Esophagus muscularis mucosa (tissue), 4 donors: ENCODE measurements at regions of chr11 and their contacts with region 1.

Region 1: DNA sequence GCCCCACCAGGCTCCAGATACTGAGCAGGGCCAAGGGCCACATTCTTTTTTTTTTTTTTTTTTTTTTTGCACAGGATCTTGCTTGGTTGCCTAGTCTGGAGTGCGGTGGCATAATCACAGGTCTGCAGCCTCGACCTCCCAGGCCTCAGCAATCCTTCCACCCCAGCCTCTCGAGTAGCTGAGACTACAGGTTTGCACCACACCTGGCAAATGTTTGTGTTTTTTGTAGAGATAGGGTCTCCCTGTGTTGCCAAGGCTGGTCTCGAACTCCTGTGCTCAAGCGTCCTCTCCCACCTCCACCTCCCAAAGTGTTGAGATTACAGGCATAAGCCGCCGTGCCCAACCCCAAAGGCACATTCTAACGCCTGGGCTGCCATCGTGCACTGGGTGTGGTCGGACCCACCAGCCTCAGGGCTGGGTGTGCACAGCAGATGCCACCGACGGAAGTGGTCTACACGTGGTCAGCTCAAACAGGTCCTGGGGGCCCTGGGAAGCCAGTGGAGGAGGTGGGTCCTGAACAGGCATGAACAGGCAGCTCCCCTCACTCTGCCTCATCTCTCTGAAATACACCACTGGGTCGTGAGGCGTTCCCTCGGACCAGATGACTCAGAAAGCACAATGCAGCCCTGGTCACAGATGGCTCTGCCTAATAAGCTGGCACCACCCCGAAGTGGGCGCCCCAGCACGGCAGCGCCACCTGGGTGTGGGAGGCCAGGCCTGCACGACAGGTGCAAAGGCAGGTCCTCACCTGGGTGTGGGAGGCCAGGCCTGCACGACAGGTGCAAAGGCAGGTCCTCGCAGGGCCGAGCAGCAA is 5.1 kb upstream of the B4GALNT4 start:
- DNase-seq: no peak
- H3K4me3 ChIP-seq: no peak overlapping the region
- H3K27ac ChIP-seq: no peak overlapping the region
- H3K4me1 ChIP-seq: peaks cover 5 to 16% (median 14%) of the 10 kb centered on the region in 4 donors
- H3K27me3 ChIP-seq: peaks cover 0 to 23% (median 20%) of the 10 kb centered on the region in 4 donors
- CTCF ChIP-seq: no peak
- EP300 ChIP-seq: no peak
- POLR2A ChIP-seq: no peak

Region 2: GRCh38 chr11:207208-207862 is 156.8 kb before region 1 on chr11 and contains the starts of genes BET1L and RIC8A:
- intact Hi-C with region 1: loop called (anchors 10 kb)
- DNase-seq: peak; percentile 99
- H3K4me3 ChIP-seq: peak within 1 kb of the TSS; percentile 81 to 99 (median 86)
- H3K27ac ChIP-seq: peak within 1 kb of the TSS; percentile 96 to 99 (median 98)
- H3K4me1 ChIP-seq: peaks cover 41 to 73% (median 63%) of the 10 kb centered on the region in 4 donors
- H3K27me3 ChIP-seq: no peaks in the 10 kb centered on the region
- CTCF ChIP-seq: no peak
- EP300 ChIP-seq: no peak
- POLR2A ChIP-seq: peak; percentile 87
- total RNA-seq, gene BET1L: 16.2 to 32.9 (median 30.5) TPM
- total RNA-seq, gene RIC8A: 76.8 to 137 (median 123) TPM

Region 3: DNA sequence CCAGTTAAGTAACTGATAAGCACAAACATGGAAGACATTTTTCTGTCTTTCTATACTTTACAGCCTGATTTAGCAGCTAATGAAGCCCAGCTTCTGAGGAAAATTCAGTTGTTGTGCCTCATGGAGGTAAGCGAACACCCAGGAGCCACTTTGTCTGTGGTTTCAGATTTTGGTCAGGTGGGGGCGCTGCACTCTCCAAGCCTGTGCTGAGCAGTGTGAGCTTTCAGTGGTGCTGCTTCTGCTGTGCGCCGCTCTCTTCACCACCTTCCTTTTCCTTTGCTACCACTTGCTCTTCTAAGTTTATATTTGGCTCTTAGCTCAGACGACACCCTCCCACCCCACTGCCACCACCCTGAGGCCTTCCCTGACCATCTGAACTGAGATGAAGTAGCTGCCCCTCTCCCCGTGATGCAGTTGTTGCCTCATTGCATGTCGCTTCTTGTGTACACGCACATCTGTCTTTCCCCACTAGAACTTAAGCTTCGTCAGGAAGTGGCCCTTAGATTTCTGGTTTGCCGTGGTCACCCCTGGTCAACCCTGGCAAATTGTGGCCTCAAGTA is 113.3 kb before region 1 on chr11:
- intact Hi-C with region 1: loop called (anchors 5 kb)
- DNase-seq: no peak
- H3K4me3 ChIP-seq: no peak overlapping the region
- H3K27ac ChIP-seq: peak overlapping the region in 1 of 4 donors; percentile 11
- H3K4me1 ChIP-seq: no peaks in the 10 kb centered on the region
- H3K27me3 ChIP-seq: no peaks in the 10 kb centered on the region
- CTCF ChIP-seq: peak; percentile 56 to 64 (median 58)
- EP300 ChIP-seq: no peak
- POLR2A ChIP-seq: no peak

Region 4: DNA sequence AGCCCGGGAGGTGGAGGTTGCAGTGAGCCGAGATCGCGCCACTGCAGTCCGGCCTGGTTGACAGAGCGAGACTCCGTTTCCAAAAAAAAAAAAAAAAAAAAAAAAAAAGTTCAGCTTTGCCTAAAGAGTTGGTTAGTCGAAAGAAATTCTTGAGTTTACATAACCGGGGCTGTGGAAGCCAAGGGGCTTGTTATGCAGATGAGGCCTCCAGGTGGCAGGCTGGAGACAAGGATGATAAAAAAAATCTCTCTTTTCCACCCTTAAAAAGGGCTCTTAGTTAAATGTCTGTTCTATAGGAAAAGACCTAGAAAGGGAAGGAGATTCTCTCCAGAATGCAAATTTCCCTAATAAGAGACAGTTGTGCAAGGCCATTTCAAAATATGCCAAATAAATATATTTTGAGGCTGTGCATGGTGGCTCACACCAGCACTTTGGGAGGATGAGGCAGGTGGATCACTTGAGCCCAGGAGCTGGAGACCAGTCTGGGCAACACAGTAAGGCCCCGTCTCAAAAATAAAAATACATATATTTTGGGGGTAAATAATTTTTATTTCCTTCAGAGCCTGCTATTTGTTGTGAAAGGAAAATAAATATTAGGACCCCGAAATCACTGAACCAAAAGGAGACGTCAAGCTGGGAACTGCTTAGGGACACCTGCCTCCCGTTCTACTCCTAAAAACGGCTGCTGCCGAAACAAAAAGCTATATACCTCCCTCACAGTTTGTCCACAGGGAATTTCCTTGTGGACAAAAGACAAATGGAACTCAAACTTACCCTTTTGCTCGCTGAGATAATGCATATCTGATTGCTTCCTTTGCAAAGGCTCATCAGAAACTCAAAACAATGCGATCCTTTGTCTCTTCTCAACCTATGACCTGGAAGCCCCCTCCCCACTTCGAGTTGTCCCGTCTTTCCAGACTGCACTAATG is 59.0 kb before region 1 on chr11:
- intact Hi-C with region 1: loop called (anchors 2 kb)
- DNase-seq: no peak
- H3K4me3 ChIP-seq: no peak overlapping the region
- H3K27ac ChIP-seq: peak overlapping the region in 3 of 4 donors; percentile 31 to 90 (median 36)
- H3K4me1 ChIP-seq: peaks cover 25 to 46% (median 35%) of the 10 kb centered on the region in 4 donors
- H3K27me3 ChIP-seq: peaks cover 0 to 15% (median 2%) of the 10 kb centered on the region in 4 donors
- CTCF ChIP-seq: peak; percentile 72 to 88 (median 73)
- EP300 ChIP-seq: no peak
- POLR2A ChIP-seq: no peak